ENCODE measurements at regions of chr11 and their contacts with region 1.

Region 1: GRCh38 chr11:44067266-44067665 is 1.2 kb downstream of the ACCS start:
- DNase-seq: no peak
- CTCF ChIP-seq: no peak

Region 2: GRCh38 chr11:44083906-44084305 is 16.6 kb after region 1 on chr11:
- CTCF ChIA-PET with region 1: interaction called, 24 read pairs
- POLR2A ChIA-PET with region 1: no interaction called
- DNase-seq: no peak
- CTCF ChIP-seq: no peak

Region 3: GRCh38 chr11:44143943-44144909 is 77.0 kb after region 1 on chr11:
- CTCF ChIA-PET with region 1: no interaction called
- POLR2A ChIA-PET with region 1: no interaction called
- DNase-seq: no peak
- CTCF ChIP-seq: no peak

Measured in GM10248 (cell line).